Right cardiac atrium (tissue), 5 donors: ENCODE measurements at regions of chr14 and their contacts with region 1.

Region 1: GRCh38 chr14:95442633-95443021 is 73.8 kb downstream of the SYNE3 start:
- DNase-seq: peak; percentile 87 to 95 (median 89)
- ATAC-seq: peak; percentile 95
- H3K4me3 ChIP-seq: no peak overlapping the region
- H3K27ac ChIP-seq: no peak overlapping the region
- H3K4me1 ChIP-seq: no peaks in the 10 kb centered on the region
- H3K27me3 ChIP-seq: no peaks in the 10 kb centered on the region

Region 2: GRCh38 chr14:95527387-95528002 is 84.9 kb after region 1 on chr14:
- intact Hi-C with region 1: loop called (anchors 2 to 5 kb)
- DNase-seq: peak in 2 of 3 donors; percentile 62 to 80
- ATAC-seq: peak; percentile 62 to 64
- H3K4me3 ChIP-seq: no peak overlapping the region
- H3K27ac ChIP-seq: no peak overlapping the region
- H3K4me1 ChIP-seq: peaks cover 17% of the 10 kb centered on the region
- H3K27me3 ChIP-seq: no peaks in the 10 kb centered on the region